ENCODE measurements at regions of chr5 and their contacts with region 1.

Region 1: GRCh38 chr5:172454358-172455086 is at the start of gene SH3PXD2B:
- DNase-seq: peak; percentile 86
- H3K4me3 ChIP-seq: peak within 1 kb of the TSS; percentile 84 to 97 (median 90)
- H3K27ac ChIP-seq: peak within 1 kb of the TSS; percentile 85 to 97 (median 95)
- H3K4me1 ChIP-seq: peaks cover 0 to 52% (median 43%) of the 10 kb centered on the region in 4 donors
- H3K27me3 ChIP-seq: no peaks in the 10 kb centered on the region
- CTCF ChIP-seq: no peak
- EP300 ChIP-seq: no peak
- POLR2A ChIP-seq: no peak
- total RNA-seq, gene SH3PXD2B: 19.3 to 45.7 (median 20.9) TPM

Region 2: DNA sequence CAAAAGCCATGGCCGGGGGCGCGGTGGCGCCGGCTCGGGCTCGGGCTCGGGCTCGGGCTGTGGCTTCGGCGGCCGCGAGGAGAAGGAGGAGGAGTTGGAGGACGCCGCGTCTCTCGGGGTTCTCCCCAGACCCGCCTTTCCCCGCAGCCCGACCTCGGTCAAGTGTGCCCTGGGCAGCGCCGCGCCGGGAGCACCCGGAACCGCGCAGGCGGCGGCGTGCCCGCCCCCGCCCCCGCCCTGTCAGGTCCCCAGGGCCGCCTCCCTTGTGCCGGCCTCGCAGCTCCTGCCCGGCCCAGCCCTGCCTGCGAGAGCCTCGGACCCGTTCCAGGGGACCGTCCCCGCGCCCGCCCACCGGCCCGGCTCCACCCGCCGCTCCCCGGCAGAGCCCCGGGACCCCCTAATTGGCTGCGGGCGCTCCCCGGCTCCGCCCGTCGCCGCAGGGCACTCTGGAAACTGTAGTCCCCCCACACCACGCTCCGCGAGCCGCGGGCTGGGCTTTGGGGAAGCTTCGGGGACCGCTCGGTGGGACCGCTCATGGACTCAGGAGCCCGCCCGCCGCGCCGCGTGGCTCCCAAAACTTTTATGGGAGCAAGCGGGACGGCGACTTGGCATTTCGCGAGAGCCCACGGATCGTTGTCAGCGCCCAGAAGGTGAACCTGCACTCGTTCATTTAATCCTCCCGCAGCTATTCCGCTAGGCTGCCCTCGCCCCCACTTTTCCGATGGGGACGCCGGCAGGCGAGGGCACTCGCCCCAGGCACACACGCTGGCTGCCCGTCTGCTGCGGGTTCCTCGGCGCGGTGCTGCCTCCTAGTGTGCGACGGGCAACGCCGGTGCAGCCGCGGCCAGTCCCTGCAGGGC is 266.3 kb before region 1 on chr5 and contains the start of gene STK10:
- intact Hi-C with region 1: loop called (anchors 5 kb)
- DNase-seq: peak; percentile 96
- H3K4me3 ChIP-seq: peak within 1 kb of the TSS; percentile 72 to 87 (median 80)
- H3K27ac ChIP-seq: peak within 1 kb of the TSS; percentile 89 to 93 (median 92)
- H3K4me1 ChIP-seq: peaks cover 0 to 26% (median 16%) of the 10 kb centered on the region in 4 donors
- H3K27me3 ChIP-seq: no peaks in the 10 kb centered on the region
- CTCF ChIP-seq: peak; percentile 70 to 91 (median 81)
- EP300 ChIP-seq: no peak
- POLR2A ChIP-seq: no peak
- total RNA-seq, gene STK10: 8.9 to 16.1 (median 12.6) TPM

Region 3: DNA sequence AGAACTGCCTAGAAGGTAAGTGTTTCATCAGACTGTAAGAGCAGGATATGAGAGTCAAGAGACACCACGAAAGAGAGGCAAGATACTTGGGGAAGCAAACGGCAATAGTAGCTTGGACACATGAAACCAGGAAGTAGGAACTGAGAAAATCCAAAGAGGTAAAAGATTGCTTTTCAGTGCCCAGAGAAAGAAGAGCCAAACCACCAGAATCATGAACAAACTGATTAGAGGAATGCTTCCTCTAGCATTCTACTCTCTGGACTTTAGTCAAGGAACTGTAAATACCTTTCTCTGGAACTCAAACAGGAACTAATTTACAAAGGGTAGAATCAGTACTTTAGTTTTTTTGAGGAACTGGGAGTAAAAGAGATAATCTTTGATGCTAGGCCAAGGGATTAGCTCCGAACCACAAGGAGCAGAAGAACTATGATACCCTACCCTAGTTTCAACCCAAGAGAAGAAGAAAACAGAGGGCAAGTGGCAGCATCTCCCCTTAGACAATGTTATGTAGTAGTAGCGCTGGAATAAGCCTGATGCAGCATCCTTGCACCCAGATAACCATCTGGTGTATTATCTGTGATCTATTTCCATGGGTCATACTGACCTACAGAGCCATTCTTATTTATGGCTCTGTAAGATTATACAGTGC is 219.3 kb before region 1 on chr5:
- intact Hi-C with region 1: no loop called
- DNase-seq: no peak
- H3K4me3 ChIP-seq: no peak overlapping the region
- H3K27ac ChIP-seq: no peak overlapping the region
- H3K4me1 ChIP-seq: peaks cover 0 to 16% (median 9%) of the 10 kb centered on the region in 4 donors
- H3K27me3 ChIP-seq: no peaks in the 10 kb centered on the region
- CTCF ChIP-seq: no peak
- EP300 ChIP-seq: no peak
- POLR2A ChIP-seq: no peak

Region 4: GRCh38 chr5:172380987-172381643 is 73.4 kb before region 1 on chr5:
- intact Hi-C with region 1: loop called (anchors 2 kb)
- DNase-seq: peak; percentile 93
- H3K4me3 ChIP-seq: peak overlapping the region in 1 of 4 donors; percentile 5
- H3K27ac ChIP-seq: peak overlapping the region; percentile 35 to 79 (median 74)
- H3K4me1 ChIP-seq: peaks cover 0 to 26% (median 20%) of the 10 kb centered on the region in 4 donors
- H3K27me3 ChIP-seq: no peaks in the 10 kb centered on the region
- CTCF ChIP-seq: no peak
- EP300 ChIP-seq: no peak
- POLR2A ChIP-seq: no peak

Region 5: GRCh38 chr5:172412724-172413286 is 41.7 kb before region 1 on chr5:
- intact Hi-C with region 1: loop called (anchors 2 kb)
- DNase-seq: peak; percentile 96
- H3K4me3 ChIP-seq: no peak overlapping the region
- H3K27ac ChIP-seq: peak overlapping the region; percentile 79 to 96 (median 86)
- H3K4me1 ChIP-seq: peaks cover 2 to 72% (median 68%) of the 10 kb centered on the region in 4 donors
- H3K27me3 ChIP-seq: no peaks in the 10 kb centered on the region
- CTCF ChIP-seq: no peak
- EP300 ChIP-seq: peak; percentile 30 to 85 (median 56)
- POLR2A ChIP-seq: no peak

Region 6: GRCh38 chr5:173057062-173057924 is 602.8 kb after region 1 on chr5:
- intact Hi-C with region 1: loop called (anchors 10 kb)
- DNase-seq: peak; percentile 99
- H3K4me3 ChIP-seq: peak overlapping the region; percentile 77 to 100 (median 100)
- H3K27ac ChIP-seq: peak overlapping the region; percentile 97 to 100 (median 99)
- H3K4me1 ChIP-seq: peaks cover 0 to 59% (median 53%) of the 10 kb centered on the region in 4 donors
- H3K27me3 ChIP-seq: no peaks in the 10 kb centered on the region
- CTCF ChIP-seq: peak in 2 of 4 experiments; percentile 30
- EP300 ChIP-seq: no peak
- POLR2A ChIP-seq: no peak

Measured in sigmoid colon (tissue), 7 donors.